Brain microvascular endothelial cell (primary cell): ENCODE measurements at regions of chr20 and their contacts with region 1.

Region 1: DNA sequence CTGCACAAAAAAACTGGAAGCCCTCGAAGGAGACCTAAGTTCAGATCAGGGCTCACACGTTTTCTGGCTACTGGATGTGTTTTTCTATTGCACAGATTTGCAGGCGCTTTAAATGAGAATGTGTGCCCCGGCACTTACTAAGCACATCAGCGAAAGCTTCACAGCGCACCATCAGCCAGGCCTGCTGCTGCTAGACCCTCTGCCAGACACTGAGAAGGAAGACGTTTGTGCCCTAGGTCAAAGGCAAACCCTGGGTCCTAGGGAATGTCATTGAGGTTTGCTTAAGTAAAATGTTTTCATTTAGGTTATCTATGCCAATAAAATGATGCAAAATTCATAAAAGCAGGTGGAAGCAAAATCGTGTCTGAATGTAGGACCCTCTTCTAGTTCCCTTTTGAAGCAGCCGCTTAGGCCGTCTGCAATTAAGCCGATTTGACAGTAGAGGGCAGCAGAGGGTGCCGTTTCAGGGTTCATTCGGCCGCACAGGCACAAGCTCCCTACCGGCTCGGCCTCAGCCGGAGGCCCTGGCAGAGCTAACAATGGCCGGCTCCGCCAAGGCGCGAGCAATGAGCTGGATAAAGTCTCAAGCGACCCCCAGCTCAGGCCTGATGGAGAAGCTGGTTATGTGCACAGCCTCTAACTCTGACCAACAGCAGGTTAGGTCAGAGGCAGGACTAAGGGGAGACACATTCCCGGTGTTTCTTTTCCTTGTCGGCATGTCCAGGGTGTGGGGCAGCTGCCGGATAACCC is 107.2 kb upstream of the FOXA2 start:
- DNase-seq: peak; percentile 62
- H3K4me3 ChIP-seq: no peak overlapping the region
- H3K27ac ChIP-seq: no peak overlapping the region
- H3K27me3 ChIP-seq: no peaks in the 10 kb centered on the region
- CTCF ChIP-seq: peak; percentile 91

Region 2: DNA sequence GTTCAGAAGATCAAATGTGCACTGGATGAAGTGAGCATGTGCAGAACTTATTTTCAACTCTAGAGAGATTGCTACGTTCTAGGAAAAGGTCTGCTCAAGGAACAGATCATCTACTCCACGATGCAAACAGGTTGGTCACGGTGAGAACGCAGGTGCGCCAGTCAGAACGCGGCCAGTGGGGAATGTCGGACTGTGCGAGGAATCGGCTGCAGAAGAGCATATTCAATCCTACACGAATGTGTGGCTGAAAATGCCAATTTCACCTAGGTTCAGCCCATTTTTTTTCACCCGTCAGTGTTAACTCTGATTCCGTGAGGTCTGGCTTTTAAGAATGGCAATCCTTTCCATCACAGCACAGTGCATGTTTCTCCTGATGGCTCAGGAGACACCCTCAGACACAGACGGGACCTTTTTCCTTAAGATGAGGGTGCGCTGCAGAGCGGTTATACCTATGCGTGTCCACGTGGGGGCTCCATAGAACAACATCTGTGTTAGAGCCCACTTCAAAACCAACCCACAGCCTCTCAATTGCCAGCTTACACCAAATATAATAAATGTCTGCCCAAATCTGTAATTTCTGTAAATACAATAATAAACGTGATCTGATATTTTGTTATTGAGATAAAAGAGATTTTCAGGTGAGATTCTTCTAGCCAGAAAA is 357.5 kb before region 1 on chr20:
- in situ Hi-C with region 1: loop called (anchors 25 kb)
- DNase-seq: peak; percentile 51
- H3K4me3 ChIP-seq: no peak overlapping the region
- H3K27ac ChIP-seq: no peak overlapping the region
- H3K27me3 ChIP-seq: no peaks in the 10 kb centered on the region
- CTCF ChIP-seq: peak; percentile 81

Region 3: GRCh38 chr20:22586645-22587310 is 104.8 kb before region 1 on chr20:
- in situ Hi-C with region 1: loop called (anchors 25 kb)
- DNase-seq: no peak
- H3K4me3 ChIP-seq: no peak overlapping the region
- H3K27ac ChIP-seq: no peak overlapping the region
- H3K27me3 ChIP-seq: peaks cover 52% of the 10 kb centered on the region
- CTCF ChIP-seq: peak; percentile 48

Region 4: DNA sequence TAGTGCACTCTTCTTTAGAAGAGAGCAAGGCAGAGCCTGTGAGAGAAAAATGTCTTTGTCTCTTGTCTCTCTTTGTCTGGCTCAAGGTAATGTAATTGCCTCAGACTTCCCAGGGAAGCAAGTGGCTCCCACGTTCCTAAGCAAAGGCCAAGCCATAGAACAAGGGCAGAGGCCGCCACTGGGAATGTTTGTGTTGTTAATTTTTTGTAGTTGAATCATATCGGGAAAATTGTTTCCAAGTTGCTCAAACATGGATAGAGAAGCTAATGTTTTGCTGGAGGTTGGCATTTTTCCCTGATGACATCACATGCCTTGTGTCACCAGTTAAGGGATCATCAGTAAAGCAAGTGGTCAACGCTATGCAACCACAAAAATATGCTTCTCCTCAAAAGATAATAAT is 104.3 kb after region 1 on chr20:
- in situ Hi-C with region 1: loop called (anchors 25 kb)
- DNase-seq: peak; percentile 99
- H3K4me3 ChIP-seq: no peak overlapping the region
- H3K27ac ChIP-seq: peak overlapping the region; percentile 94
- H3K27me3 ChIP-seq: no peaks in the 10 kb centered on the region
- CTCF ChIP-seq: no peak

Region 5: DNA sequence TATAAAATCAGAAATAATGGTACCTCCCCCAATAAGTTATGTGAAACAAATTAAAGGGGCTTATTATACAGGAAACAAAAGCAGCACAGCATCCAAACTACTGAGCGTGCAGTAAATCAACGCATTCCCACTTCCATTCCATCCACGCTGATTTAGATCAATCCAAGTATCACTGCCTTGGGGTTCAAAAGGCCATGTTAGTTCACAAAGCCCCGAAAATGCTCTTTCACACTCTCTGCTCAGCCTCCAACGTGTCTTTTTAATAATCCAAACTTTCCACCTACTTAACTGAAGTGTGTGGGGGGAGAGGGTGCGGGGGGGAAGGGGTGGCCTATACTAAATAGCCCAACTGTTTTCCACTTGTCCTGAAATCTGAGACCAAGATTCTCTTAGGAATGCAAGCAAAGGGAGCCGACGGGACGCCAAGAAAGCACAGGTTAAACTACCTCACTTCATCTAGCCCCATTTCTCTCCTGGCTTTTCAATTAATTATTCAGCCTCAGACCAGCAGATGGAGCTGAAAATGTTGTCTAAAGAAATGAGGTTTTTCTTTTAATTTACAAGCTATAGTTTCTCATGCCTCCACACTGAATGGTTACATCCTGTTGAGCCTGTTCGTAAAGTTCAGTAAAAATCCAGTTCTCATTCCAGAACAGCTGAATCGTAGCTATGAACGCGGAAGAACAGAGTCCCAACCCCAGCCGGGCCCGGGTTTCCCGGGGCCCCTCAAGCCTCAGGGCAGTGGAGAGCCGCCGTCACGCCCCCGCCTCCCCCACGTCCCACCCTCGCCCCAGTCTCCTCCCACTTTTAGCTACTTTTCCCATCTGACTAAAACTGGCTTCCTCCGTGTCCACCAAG is 658.0 kb after region 1 on chr20:
- in situ Hi-C with region 1: loop called (anchors 25 kb)
- DNase-seq: no peak
- H3K4me3 ChIP-seq: peak overlapping the region; percentile 90
- H3K27ac ChIP-seq: peak overlapping the region; percentile 97
- H3K27me3 ChIP-seq: no peaks in the 10 kb centered on the region
- CTCF ChIP-seq: peak; percentile 45